ENCODE measurements at regions of chr6 and their contacts with region 1.

Region 1: DNA sequence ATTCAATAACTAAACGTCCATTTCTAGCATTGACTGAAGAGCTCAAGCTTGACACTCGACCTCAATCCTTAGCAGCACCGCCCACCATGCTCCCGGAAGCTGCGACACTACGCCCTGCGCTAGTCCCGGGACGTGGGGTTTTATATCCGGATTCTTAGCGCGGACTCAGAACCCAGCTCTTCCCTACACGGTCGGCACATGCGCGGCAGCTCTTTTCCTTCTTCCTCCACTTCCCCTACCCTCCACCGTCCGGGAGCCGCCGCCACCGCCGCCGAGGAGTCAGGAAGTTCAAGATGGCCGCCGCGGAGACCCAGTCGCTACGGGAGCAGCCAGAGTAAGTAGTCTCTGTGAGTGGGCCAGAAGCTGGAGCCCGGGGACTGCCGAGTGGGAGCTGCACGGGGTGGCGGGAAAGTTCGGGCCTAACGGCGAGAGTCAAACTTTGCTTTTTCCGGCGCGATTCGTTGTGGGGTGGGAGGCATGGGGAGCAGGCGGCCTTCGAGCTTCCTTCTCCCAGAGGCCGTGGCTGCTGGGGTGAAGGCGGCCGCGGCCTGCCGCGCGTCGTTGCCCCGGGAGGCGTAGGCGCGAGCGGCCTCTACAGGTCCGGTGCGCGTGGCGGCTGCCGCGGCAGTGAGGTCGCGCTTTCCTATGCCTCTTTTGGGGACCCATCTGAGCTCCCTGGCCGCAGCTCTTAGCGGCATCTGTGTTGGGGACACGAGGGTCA is 57.6 kb downstream of the FAM217A start:
- DNase-seq: peak; percentile 98
- H3K4me3 ChIP-seq: peak overlapping the region; percentile 63 to 91 (median 80)
- H3K27ac ChIP-seq: peak overlapping the region; percentile 94 to 98 (median 98)
- H3K4me1 ChIP-seq: peaks cover 0 to 72% (median 67%) of the 10 kb centered on the region in 4 donors
- H3K27me3 ChIP-seq: no peaks in the 10 kb centered on the region
- CTCF ChIP-seq: peak in 2 of 4 experiments; percentile 10 to 36
- EP300 ChIP-seq: peak in 1 of 4 donors; percentile 34
- POLR2A ChIP-seq: peak; percentile 52 to 75

Region 2: DNA sequence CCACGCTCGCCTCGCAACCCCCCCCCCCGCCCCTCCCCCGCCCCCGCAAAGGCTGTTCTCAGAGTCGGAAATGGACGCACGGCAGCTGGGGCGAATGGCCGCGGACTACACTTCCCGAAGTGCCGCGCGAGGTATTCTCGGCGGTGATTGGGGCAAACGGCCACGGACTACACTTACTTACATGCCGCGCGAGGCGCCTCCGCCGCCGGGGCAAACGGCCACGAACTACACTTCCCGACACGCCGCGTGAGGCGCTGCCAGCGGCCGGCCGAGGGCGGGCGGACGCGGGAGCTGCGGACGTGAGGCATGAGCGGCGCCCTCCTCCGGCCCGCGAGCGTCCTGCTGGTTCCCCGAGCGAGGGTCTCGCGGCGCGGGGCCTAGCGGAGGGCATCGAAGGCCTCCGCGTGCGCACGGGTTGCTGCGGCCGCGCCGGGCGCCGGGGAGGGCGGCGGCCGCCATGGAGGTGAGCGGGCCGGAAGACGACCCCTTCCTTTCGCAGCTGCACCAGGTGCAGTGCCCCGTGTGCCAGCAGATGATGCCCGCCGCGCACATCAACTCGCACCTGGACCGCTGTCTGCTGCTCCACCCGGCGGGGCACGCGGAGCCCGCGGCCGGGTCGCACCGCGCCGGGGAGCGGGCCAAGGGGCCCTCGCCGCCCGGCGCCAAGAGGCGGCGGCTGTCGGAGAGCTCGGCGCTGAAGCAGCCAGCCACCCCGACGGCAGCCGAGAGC is 1256.0 kb before region 1 on chr6 and contains the start of gene WRNIP1:
- intact Hi-C with region 1: loop called (anchors 10 kb)
- DNase-seq: peak; percentile 100
- H3K4me3 ChIP-seq: peak within 1 kb of the TSS; percentile 61 to 96 (median 90)
- H3K27ac ChIP-seq: peak within 1 kb of the TSS; percentile 94 to 98 (median 96)
- H3K4me1 ChIP-seq: peaks cover 0 to 48% (median 36%) of the 10 kb centered on the region in 4 donors
- H3K27me3 ChIP-seq: no peaks in the 10 kb centered on the region
- CTCF ChIP-seq: peak in 3 of 4 experiments; percentile 8 to 67 (median 21)
- EP300 ChIP-seq: no peak
- POLR2A ChIP-seq: no peak
- total RNA-seq, gene WRNIP1: 41.0 to 56.6 (median 47.9) TPM

Region 3: GRCh38 chr6:4135665-4136353 is 114.5 kb after region 1 on chr6:
- intact Hi-C with region 1: loop called (anchors 5 kb)
- DNase-seq: peak; percentile 100
- H3K4me3 ChIP-seq: peak overlapping the region; percentile 66 to 93 (median 80)
- H3K27ac ChIP-seq: peak overlapping the region; percentile 90 to 97 (median 93)
- H3K4me1 ChIP-seq: peaks cover 0 to 24% (median 21%) of the 10 kb centered on the region in 4 donors
- H3K27me3 ChIP-seq: no peaks in the 10 kb centered on the region
- CTCF ChIP-seq: peak in 1 of 4 experiments; percentile 9
- EP300 ChIP-seq: no peak
- POLR2A ChIP-seq: peak in 1 of 2 donors; percentile 22

Measured in sigmoid colon (tissue), 7 donors.